Breast epithelium (tissue), 4 donors: ENCODE measurements at regions of chrX and their contacts with region 1.

Region 1: GRCh38 chrX:40729598-40730584 is 5.5 kb downstream of the MED14 start:
- DNase-seq: no peak
- H3K4me3 ChIP-seq: no peak overlapping the region
- H3K27ac ChIP-seq: no peak overlapping the region
- H3K4me1 ChIP-seq: no peaks in the 10 kb centered on the region
- H3K27me3 ChIP-seq: peaks cover 0 to 51% of the 10 kb centered on the region in 2 donors
- CTCF ChIP-seq: no peak
- POLR2A ChIP-seq: no peak

Region 2: DNA sequence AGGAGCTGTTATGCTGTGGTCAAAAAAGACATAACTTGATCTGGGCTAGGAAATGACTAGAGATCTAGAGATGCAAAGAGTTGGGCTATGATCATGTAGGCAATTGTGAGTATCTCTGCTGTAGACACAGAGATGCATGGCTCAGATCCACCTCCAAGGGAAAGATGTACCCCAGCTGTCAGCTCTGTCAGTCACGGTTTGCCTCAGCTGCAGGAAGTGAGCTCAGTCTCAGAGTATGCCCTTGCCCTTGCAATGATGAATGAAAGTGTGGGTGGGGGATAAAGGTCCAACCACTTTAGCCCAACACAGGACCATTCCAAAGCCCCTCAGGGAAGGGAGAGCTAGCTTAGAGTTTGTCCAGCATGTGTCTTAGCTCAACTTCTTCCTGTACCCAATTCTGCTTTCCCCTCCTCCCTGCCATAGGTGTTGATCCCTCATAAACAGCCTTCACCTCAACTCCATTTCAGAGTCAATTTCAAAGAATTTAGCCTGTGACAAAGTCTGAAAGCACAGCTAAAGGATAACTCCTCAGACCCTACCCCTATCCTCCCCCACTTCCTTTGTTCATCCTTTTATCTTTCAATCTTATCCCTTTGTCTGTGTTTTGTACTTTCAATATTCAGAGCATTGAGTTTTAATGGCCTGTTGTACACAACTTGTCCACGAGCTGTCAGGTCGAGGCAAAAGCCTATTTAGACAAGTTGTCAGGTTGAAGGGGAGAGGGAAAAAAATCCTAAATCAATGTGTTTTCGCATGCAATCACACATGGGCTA is 1838.1 kb before region 1 on chrX:
- intact Hi-C with region 1: loop called (anchors 10 kb)
- DNase-seq: no peak
- H3K4me3 ChIP-seq: no peak overlapping the region
- H3K27ac ChIP-seq: no peak overlapping the region
- H3K4me1 ChIP-seq: no peaks in the 10 kb centered on the region
- H3K27me3 ChIP-seq: peaks cover 0 to 47% of the 10 kb centered on the region in 2 donors
- CTCF ChIP-seq: no peak
- POLR2A ChIP-seq: no peak